ENCODE measurements at regions of chr9 and their contacts with region 1.

Region 1: GRCh38 chr9:107299437-107299836 is 16.4 kb downstream of the RAD23B start:
- DNase-seq: no peak
- H3K4me3 ChIP-seq: no peak overlapping the region
- H3K27ac ChIP-seq: peak overlapping the region; percentile 11
- H3K4me1 ChIP-seq: peaks cover 19% of the 10 kb centered on the region; the same call in 1 of the 2 replicates
- H3K27me3 ChIP-seq: no peaks in the 10 kb centered on the region
- CTCF ChIP-seq: peak; percentile 50; the same call in 1 of the 2 replicates

Region 2: GRCh38 chr9:106228861-106229260 is 1070.6 kb before region 1 on chr9:
- CTCF ChIA-PET with region 1: interaction called, 11 read pairs
- POLR2A ChIA-PET with region 1: no interaction called
- intact Hi-C with region 1: no loop called
- DNase-seq: no peak
- H3K4me3 ChIP-seq: no peak overlapping the region
- H3K27ac ChIP-seq: no peak overlapping the region
- H3K4me1 ChIP-seq: no peaks in the 10 kb centered on the region
- H3K27me3 ChIP-seq: no peaks in the 10 kb centered on the region; the same call in 1 of the 2 replicates
- CTCF ChIP-seq: no peak

Region 3: DNA sequence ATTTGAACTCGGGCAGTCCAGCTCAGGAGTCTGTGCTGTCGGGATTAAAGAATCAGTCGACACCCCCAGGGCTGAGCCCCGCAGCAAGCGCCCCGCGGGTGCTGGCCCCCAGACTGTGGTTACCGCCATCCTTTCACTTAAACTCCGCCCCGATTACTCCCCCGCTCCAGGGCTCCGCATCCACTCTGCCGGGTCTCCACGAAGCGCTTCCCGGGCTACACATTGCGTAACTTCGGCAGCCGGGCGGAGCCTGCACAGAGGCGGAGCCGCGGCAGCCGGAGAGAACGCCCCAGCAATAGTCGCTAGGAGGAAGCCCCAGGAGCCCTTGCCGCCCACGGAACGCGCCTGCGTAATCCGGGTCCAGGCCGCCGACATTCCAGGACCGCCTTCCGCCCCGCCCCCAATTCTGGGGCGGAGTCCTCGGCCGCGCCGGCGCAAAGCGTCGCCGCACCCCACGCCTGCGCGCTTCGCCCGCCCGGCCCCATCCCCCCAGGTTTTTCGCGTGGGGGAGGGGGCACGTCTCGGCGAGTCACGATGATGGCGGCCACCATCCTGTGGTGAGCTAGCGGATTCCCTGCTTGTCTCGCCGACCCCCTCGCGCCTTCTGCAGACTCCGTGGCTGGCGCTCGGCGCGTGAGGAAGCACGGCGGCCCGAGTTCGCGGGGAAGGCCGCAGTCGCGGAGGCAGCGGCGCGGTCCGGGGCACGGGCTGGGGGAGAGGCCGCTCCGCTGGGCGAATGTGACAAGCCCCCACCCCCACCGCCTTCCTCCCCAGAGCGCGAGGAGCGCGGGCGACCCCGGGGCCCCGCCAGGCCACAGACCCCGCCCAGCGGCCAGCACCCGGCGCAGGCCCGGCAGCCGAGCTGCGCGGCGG is 16.4 kb before region 1 on chr9 and contains the start of gene RAD23B:
- CTCF ChIA-PET with region 1: interaction called, 3 read pairs
- POLR2A ChIA-PET with region 1: interaction called, 11 read pairs
- intact Hi-C with region 1: no loop called
- DNase-seq: peak; percentile 94 to 99
- H3K4me3 ChIP-seq: peak within 1 kb of the TSS; percentile 77
- H3K27ac ChIP-seq: peak within 1 kb of the TSS; percentile 88
- H3K4me1 ChIP-seq: peaks cover 58% of the 10 kb centered on the region
- H3K27me3 ChIP-seq: no peaks in the 10 kb centered on the region
- CTCF ChIP-seq: no peak
- total RNA-seq, gene RAD23B: 164 and 176 TPM in 2 replicates

Region 4: GRCh38 chr9:107316795-107317661 is 17.6 kb after region 1 on chr9:
- CTCF ChIA-PET with region 1: no interaction called
- POLR2A ChIA-PET with region 1: no interaction called
- intact Hi-C with region 1: loop called (anchors 1 kb)
- DNase-seq: no peak
- H3K4me3 ChIP-seq: no peak overlapping the region
- H3K27ac ChIP-seq: 0 out of 2 replicates have a peak overlapping the region, but pooled peaks have one; percentile 5
- H3K4me1 ChIP-seq: no peaks in the 10 kb centered on the region
- H3K27me3 ChIP-seq: no peaks in the 10 kb centered on the region
- CTCF ChIP-seq: no peak

Region 5: DNA sequence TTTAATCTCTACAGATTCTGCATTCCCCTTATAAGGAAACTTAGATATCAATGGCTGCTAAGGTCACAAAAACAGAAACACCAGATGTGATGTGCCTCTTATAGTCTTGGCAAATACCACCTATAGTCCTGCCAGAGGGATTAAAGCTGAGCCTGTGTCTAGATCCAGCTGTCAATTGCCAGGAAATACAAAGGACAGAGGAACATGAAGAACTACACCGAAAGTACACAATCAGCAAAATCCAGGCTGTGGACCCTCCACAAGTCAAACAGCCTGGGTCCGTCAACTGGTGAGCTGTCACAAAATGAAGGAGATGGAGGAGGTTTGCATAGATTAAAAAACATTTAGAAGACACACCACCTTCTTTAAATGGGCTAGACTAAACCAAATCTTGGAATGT is 104.7 kb after region 1 on chr9:
- CTCF ChIA-PET with region 1: no interaction called
- POLR2A ChIA-PET with region 1: no interaction called
- intact Hi-C with region 1: no loop called
- DNase-seq: no peak
- H3K4me3 ChIP-seq: no peak overlapping the region
- H3K27ac ChIP-seq: no peak overlapping the region
- H3K4me1 ChIP-seq: no peaks in the 10 kb centered on the region
- H3K27me3 ChIP-seq: no peaks in the 10 kb centered on the region
- CTCF ChIP-seq: no peak

Measured in PC-9 (cell line).